Thyroid gland (tissue), 4 donors: ENCODE measurements at regions of chr5 and their contacts with region 1.

Region 1: DNA sequence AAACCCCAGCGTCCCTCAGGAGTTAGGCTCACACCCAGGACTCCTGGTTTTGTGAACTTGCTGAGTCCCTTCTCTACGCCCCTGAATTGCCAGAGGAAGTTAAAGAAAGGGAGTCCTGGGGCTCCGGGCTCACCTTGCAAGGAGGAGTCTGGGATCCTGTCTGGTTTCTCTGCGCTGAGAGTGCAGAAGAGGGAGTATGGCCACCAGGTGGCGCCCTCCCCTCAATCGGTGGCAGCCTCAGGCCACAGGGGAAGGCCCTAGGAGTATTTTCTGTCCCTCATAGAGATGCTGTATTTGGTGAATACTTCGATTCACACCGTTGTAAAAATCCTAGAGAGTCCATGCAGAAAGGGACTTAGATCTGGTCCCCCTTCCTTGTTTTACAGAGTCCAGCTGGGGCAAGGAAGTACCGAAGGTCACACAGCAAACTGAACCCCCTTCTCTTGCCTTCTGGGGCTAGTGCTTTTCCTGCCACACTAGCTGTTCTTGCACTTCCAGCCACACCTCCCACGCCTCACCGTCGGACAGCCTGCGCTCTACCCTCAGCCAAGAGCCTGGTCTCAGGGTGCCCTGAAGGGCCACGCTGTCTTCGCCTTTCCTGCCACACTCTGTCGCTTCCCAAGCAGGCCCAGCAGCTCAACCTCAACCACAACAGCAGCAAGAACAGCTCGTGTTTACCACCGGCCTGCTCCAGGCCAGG is 10.2 kb downstream of the HAND1 start:
- DNase-seq: peak; percentile 77 to 84
- H3K4me3 ChIP-seq: no peak overlapping the region
- H3K27ac ChIP-seq: no peak overlapping the region
- H3K4me1 ChIP-seq: peaks cover 0 to 2% of the 10 kb centered on the region in 2 donors
- H3K27me3 ChIP-seq: peaks cover 24% of the 10 kb centered on the region
- CTCF ChIP-seq: peak; percentile 69 to 92 (median 76)
- POLR2A ChIP-seq: no peak

Region 2: DNA sequence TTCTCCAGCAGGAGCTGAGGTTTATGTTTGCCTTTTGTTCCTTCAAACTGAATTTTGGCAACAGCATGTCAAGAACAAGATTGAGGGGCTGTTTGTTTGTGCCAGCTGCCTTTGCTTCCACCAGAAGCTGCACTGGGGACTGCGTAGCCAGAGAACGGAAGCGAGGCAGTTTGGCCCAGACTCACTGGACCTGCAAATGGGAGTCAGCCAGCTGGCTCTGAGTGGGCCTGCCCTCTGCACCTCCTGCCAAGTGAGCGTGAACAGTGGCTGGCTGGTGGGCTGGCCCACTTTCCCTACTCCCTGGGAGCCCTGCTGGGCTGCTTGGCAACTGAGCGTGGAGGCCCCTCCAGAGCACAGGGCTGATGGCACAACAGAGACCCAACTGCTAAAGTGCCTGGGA is 165.6 kb before region 1 on chr5:
- intact Hi-C with region 1: no loop called
- DNase-seq: peak; percentile 95 to 96
- H3K4me3 ChIP-seq: no peak overlapping the region
- H3K27ac ChIP-seq: peak overlapping the region; percentile 58 to 82 (median 66)
- H3K4me1 ChIP-seq: peaks cover 15 to 20% of the 10 kb centered on the region in 2 donors
- H3K27me3 ChIP-seq: no peaks in the 10 kb centered on the region
- CTCF ChIP-seq: no peak
- POLR2A ChIP-seq: peak in 1 of 2 donors; percentile 30

Region 3: DNA sequence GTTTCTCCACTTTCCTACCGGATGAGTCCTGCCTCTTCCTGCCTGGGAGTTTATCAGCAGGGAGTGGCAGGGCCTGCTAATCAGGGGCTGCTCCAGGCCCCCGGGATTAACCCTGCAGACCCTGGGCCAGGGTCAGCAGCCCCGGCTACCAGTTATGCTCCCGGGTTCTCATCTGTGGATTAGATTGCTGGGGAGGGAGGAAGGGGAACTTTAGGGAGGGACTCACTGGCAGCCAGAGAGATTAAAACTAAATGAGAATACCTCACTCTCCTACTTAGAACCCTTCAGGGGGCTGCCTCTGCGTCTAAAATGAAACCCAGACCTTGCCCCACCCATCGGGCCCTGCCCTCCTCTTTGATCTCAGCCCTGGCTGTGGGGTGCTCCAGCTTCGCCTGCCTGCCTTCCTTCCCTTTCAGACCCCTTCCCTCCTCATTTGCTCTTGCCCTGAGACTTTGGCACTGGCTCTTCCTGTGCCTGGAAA is 140.8 kb after region 1 on chr5:
- intact Hi-C with region 1: loop called (anchors 5 kb)
- DNase-seq: no peak
- H3K4me3 ChIP-seq: no peak overlapping the region
- H3K27ac ChIP-seq: no peak overlapping the region
- H3K4me1 ChIP-seq: peaks cover 14 to 16% of the 10 kb centered on the region in 2 donors
- H3K27me3 ChIP-seq: peaks cover 21% of the 10 kb centered on the region
- CTCF ChIP-seq: no peak
- POLR2A ChIP-seq: no peak